Gastrocnemius medialis (tissue), 4 donors: ENCODE measurements at regions of chr2 and their contacts with region 1.

Region 1: GRCh38 chr2:74690571-74690970 is 36.5 kb downstream of the SEMA4F start:
- DNase-seq: peak in 1 of 2 donors; percentile 21
- ATAC-seq: peak; percentile 77 to 80
- H3K4me3 ChIP-seq: no peak overlapping the region
- H3K27ac ChIP-seq: no peak overlapping the region
- H3K4me1 ChIP-seq: peaks cover 20 to 30% of the 10 kb centered on the region in 2 donors
- H3K27me3 ChIP-seq: no peaks in the 10 kb centered on the region
- CTCF ChIP-seq: peak; percentile 46 to 79 (median 69)
- POLR2A ChIP-seq: no peak

Region 2: DNA sequence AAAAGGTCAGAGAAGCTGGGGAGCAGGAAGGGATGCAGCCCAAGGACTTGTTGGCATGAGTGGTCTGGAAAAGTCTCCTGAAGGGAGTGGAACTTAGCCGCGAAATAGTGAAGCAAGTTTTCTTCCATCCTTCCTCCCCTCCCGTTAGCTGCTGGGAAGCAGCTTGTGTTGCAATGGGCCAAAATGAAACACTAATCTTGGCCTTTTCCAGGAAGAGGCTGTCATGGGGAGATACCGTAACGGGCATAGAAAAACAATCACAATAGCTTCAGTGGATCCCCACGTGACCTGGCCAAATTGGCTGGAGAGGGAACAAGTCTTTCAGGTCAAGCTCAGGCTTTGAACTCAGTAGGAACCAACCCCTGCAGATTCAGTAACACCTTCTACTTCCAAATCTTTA is 12.8 kb after region 1 on chr2:
- in situ Hi-C with region 1: no loop called
- intact Hi-C with region 1: no loop called
- DNase-seq: peak; percentile 43 to 52
- ATAC-seq: peak; percentile 54 to 71
- H3K4me3 ChIP-seq: no peak overlapping the region
- H3K27ac ChIP-seq: peak overlapping the region; percentile 50 to 80 (median 72)
- H3K4me1 ChIP-seq: peaks cover 51 to 58% of the 10 kb centered on the region in 2 donors
- H3K27me3 ChIP-seq: no peaks in the 10 kb centered on the region
- CTCF ChIP-seq: no peak
- POLR2A ChIP-seq: no peak

Region 3: GRCh38 chr2:74715078-74715791 is 24.7 kb after region 1 on chr2:
- in situ Hi-C with region 1: no loop called
- intact Hi-C with region 1: loop called (anchors 2 kb)
- DNase-seq: peak; percentile 48 to 69
- ATAC-seq: peak; percentile 83 to 86
- H3K4me3 ChIP-seq: peak overlapping the region; percentile 56 to 63 (median 58)
- H3K27ac ChIP-seq: peak overlapping the region; percentile 62 to 80 (median 70)
- H3K4me1 ChIP-seq: peaks cover 17 to 24% of the 10 kb centered on the region in 2 donors
- H3K27me3 ChIP-seq: no peaks in the 10 kb centered on the region
- CTCF ChIP-seq: peak; percentile 57 to 88 (median 85)
- POLR2A ChIP-seq: peak in 1 of 2 donors; percentile 25

Region 4: GRCh38 chr2:74876081-74876886 is 185.7 kb after region 1 on chr2:
- in situ Hi-C with region 1: no loop called
- intact Hi-C with region 1: loop called (anchors 1 kb)
- DNase-seq: peak in 1 of 2 donors; percentile 29
- ATAC-seq: peak; percentile 65 to 74
- H3K4me3 ChIP-seq: no peak overlapping the region
- H3K27ac ChIP-seq: peak overlapping the region; percentile 41 to 73 (median 62)
- H3K4me1 ChIP-seq: peaks cover 0 to 28% of the 10 kb centered on the region in 2 donors
- H3K27me3 ChIP-seq: no peaks in the 10 kb centered on the region
- CTCF ChIP-seq: peak; percentile 49 to 78 (median 77)
- POLR2A ChIP-seq: no peak

Region 5: GRCh38 chr2:74908748-74909444 is 218.3 kb after region 1 on chr2:
- in situ Hi-C with region 1: no loop called
- intact Hi-C with region 1: no loop called
- DNase-seq: no peak
- ATAC-seq: no peak
- H3K4me3 ChIP-seq: no peak overlapping the region
- H3K27ac ChIP-seq: no peak overlapping the region
- H3K4me1 ChIP-seq: no peaks in the 10 kb centered on the region
- H3K27me3 ChIP-seq: peaks cover 11 to 32% (median 17%) of the 10 kb centered on the region in 3 donors
- CTCF ChIP-seq: no peak
- POLR2A ChIP-seq: no peak

Region 6: DNA sequence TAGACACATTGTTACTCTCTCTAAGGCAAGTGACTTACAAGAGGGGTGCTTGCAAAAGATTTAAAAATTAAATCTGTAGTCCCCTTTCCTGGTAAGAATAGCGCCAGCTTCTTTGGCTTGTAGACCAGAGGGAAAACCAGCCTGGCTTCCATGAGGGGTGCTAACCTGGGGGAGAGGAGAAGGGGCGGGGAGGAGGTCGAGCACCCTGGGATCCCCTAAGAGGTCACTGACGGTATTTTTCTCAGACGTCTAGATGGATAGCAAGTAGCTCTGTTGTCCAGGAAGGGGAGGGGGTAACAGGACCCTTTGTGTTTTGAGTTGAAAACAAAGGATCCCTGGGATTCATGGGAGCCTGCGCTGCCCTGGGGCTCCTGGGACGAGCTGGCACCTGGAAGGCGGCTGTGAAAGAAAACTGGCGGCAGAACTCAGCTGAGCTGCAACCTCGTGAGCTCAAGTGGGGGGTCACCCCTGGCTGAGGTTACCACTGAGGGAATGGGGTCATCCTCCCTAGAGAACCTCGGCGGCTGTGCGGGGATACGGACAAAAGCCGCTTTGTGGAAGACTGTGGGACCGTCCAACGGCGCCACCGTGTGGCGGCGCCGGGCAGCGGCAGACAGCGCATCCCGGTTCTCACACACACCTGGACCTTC is 918.2 kb after region 1 on chr2:
- in situ Hi-C with region 1: loop called in 1 of 4 experiments (anchors 25 kb)
- intact Hi-C with region 1: no loop called
- DNase-seq: peak in 1 of 2 donors; percentile 18
- ATAC-seq: peak; percentile 54 to 75
- H3K4me3 ChIP-seq: peak overlapping the region in 2 of 4 donors; percentile 4 to 13
- H3K27ac ChIP-seq: no peak overlapping the region
- H3K4me1 ChIP-seq: peaks cover 0 to 6% of the 10 kb centered on the region in 2 donors
- H3K27me3 ChIP-seq: peaks cover 5 to 17% (median 7%) of the 10 kb centered on the region in 3 donors
- CTCF ChIP-seq: peak; percentile 71 to 91 (median 79)
- POLR2A ChIP-seq: no peak